ENCODE measurements at regions of chr1 and their contacts with region 1.

Region 1: DNA sequence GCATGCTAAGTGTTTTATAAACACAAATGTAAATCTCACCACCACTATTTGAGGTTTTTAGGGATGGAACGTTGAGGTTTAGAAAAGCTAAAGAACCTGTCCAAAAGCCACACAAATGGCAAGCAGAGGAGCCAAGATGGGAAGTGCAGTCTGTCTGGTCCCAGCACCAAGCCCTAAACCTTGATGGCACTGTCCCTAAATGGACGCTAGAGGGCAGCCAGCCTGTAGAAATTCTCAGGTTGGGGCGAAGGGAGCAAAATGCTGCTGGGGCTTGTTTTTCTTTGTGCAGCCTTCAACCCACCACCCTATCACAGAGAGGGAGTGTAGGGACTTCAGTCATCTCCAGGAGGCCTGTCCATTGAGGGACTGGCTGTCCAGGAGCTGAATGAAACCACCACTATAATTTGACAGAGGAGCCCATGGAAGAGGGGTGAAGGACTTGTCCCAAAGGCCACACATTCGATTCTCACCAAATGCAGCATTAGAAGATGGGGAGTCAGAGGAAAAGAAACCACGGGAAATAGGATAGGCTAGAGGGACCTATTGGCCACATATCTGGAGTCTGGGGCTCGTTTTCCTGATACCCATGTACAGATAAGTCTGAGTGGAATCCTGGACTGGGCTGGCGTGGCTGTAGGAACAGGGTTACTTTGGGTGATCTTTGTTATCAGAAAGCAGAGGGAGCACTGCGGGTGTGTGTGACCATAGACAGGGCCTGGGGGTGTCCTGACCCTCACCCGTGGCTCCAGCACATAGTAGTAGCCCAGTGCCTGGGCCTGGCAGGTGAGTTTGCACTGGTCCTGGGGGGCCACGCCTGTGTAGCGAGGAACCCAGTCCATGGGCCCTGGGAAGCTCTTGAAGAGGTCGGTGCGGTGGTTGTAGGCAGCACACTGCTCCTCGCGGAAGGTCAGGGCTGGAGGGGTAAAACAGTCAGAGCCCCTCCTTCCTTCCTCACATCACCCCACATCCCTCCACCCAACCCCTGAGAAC is 6.1 kb downstream of the ADAMTS4 start:
- DNase-seq: peak; percentile 68
- ATAC-seq: peak; percentile 72
- H3K4me3 Mint-ChIP-seq: no peak overlapping the region
- H3K27ac Mint-ChIP-seq: peak overlapping the region; percentile 47
- H3K4me1 Mint-ChIP-seq: peaks cover 24% of the 10 kb centered on the region
- H3K27me3 Mint-ChIP-seq: no peaks in the 10 kb centered on the region
- CTCF ChIP-seq: peak; percentile 71

Region 2: GRCh38 chr1:161008924-161009510 is 183.8 kb before region 1 on chr1:
- CTCF ChIA-PET with region 1: no interaction called
- POLR2A ChIA-PET with region 1: no interaction called
- DNase-seq: no peak
- ATAC-seq: no peak
- H3K4me3 Mint-ChIP-seq: no peak overlapping the region
- H3K27ac Mint-ChIP-seq: peak overlapping the region; percentile 54; the same call in 1 of the 2 replicates
- H3K4me1 Mint-ChIP-seq: peaks cover 47% of the 10 kb centered on the region
- H3K27me3 Mint-ChIP-seq: no peaks in the 10 kb centered on the region
- CTCF ChIP-seq: no peak

Region 3: DNA sequence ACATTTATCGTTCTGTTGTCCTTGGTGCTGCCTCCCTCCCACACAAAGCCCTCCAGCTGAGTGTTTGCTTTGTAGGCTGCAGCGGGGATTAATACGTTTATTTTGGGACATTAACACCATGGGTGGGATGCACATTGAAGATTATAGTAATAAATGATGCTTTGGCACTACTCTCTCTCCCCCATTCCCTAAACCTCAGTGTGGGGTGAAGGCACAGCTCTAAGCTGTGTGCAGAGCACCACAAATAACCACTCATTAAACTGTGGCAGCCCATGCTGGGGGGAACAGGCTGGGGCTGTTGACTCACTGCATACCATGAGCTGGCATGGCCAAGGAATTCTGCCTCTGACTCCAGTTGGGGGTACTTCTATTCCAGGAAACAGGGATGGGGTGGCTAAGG is 73.4 kb after region 1 on chr1:
- CTCF ChIA-PET with region 1: no interaction called
- POLR2A ChIA-PET with region 1: no interaction called
- DNase-seq: no peak
- ATAC-seq: no peak; the same call in 1 of the 2 replicates
- H3K4me3 Mint-ChIP-seq: no peak overlapping the region
- H3K27ac Mint-ChIP-seq: no peak overlapping the region
- H3K4me1 Mint-ChIP-seq: peaks cover 15% of the 10 kb centered on the region
- H3K27me3 Mint-ChIP-seq: peaks cover 22% of the 10 kb centered on the region
- CTCF ChIP-seq: no peak

Region 4: GRCh38 chr1:161382214-161383019 is 189.6 kb after region 1 on chr1:
- CTCF ChIA-PET with region 1: interaction called, 15 read pairs
- POLR2A ChIA-PET with region 1: no interaction called
- DNase-seq: no peak
- ATAC-seq: peak; percentile 62
- H3K4me3 Mint-ChIP-seq: no peak overlapping the region
- H3K27ac Mint-ChIP-seq: no peak overlapping the region
- H3K4me1 Mint-ChIP-seq: peaks cover 16% of the 10 kb centered on the region
- H3K27me3 Mint-ChIP-seq: no peaks in the 10 kb centered on the region
- CTCF ChIP-seq: peak; percentile 36; the same call in 1 of the 2 replicates